ENCODE measurements at regions of chr16 and their contacts with region 1.

Region 1: GRCh38 chr16:14168146-14168545 is 97.0 kb downstream of the MRTFB start:
- DNase-seq: no peak
- ATAC-seq: no peak
- H3K4me3 ChIP-seq: no peak overlapping the region
- H3K27ac ChIP-seq: no peak overlapping the region
- H3K4me1 ChIP-seq: no peaks in the 10 kb centered on the region; the same call in 1 of the 2 replicates
- H3K27me3 ChIP-seq: no peaks in the 10 kb centered on the region
- CTCF ChIP-seq: no peak
- POLR2A ChIP-seq: no peak
- RAD21 ChIP-seq: no peak

Region 2: GRCh38 chr16:14219983-14220382 is 51.8 kb after region 1 on chr16:
- CTCF ChIA-PET with region 1: no interaction called
- POLR2A ChIA-PET with region 1: no interaction called
- dilution Hi-C with region 1: no loop called
- in situ Hi-C with region 1: loop called (anchors 10 kb)
- intact Hi-C with region 1: no loop called
- DNase-seq: no peak
- ATAC-seq: peak; percentile 48
- H3K4me3 ChIP-seq: no peak overlapping the region
- H3K27ac ChIP-seq: no peak overlapping the region
- H3K4me1 ChIP-seq: peaks cover 2% of the 10 kb centered on the region; the same call in 1 of the 2 replicates
- H3K27me3 ChIP-seq: no peaks in the 10 kb centered on the region
- CTCF ChIP-seq: no peak
- POLR2A ChIP-seq: no peak
- RAD21 ChIP-seq: no peak

Region 3: DNA sequence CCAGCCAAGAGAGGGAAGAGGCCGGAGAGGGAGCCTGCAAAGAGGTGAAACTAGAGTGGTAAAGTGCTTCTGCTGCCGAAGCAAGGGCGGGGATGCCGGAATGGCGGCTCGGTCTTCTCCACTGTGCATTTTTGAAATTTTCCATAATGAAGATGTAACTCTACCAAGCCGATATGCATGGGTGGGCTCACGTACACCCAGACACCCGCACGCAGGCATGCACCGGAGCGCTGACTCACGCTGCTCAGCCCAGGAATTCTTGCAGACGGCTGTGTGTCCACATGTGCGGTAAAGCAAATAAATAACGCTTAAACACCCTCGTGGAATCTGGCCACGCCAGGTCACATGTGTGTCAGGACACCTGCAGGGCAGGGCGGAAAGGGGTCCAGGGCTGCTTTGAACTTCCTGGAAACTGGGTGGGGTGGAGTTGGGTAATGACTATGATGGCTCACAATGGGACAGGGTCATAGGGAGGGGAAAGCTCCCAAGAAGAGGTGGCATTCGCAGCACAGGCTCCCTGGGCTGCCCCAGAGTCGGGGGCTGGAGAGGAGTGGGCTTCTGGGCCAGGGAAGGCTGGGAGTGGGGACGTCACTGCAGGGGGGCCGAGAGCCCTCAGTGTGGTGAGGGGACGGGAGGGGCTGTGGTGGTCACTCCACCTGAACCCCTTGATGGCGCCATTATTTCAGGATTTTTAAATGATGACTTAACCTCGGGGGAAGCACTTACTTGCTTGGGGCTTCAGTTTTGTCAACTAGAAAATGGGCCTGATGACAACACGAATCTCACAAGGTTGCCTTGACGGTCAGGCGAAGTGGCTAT is 196.4 kb after region 1 on chr16:
- CTCF ChIA-PET with region 1: no interaction called
- POLR2A ChIA-PET with region 1: no interaction called
- dilution Hi-C with region 1: no loop called
- in situ Hi-C with region 1: no loop called
- intact Hi-C with region 1: no loop called
- DNase-seq: peak; percentile 89
- ATAC-seq: peak; percentile 63
- H3K4me3 ChIP-seq: no peak overlapping the region; the same call in 1 of the 2 replicates
- H3K27ac ChIP-seq: 0 out of 2 replicates have a peak overlapping the region, but pooled peaks have one; percentile 11
- H3K4me1 ChIP-seq: peaks cover 10% of the 10 kb centered on the region
- H3K27me3 ChIP-seq: no peaks in the 10 kb centered on the region; the same call in 1 of the 2 replicates
- CTCF ChIP-seq: no peak
- POLR2A ChIP-seq: no peak
- RAD21 ChIP-seq: no peak

Measured in IMR-90 (cell line).